WTC11 (cell line): ENCODE measurements at regions of chr3 and their contacts with region 1.

Region 1: DNA sequence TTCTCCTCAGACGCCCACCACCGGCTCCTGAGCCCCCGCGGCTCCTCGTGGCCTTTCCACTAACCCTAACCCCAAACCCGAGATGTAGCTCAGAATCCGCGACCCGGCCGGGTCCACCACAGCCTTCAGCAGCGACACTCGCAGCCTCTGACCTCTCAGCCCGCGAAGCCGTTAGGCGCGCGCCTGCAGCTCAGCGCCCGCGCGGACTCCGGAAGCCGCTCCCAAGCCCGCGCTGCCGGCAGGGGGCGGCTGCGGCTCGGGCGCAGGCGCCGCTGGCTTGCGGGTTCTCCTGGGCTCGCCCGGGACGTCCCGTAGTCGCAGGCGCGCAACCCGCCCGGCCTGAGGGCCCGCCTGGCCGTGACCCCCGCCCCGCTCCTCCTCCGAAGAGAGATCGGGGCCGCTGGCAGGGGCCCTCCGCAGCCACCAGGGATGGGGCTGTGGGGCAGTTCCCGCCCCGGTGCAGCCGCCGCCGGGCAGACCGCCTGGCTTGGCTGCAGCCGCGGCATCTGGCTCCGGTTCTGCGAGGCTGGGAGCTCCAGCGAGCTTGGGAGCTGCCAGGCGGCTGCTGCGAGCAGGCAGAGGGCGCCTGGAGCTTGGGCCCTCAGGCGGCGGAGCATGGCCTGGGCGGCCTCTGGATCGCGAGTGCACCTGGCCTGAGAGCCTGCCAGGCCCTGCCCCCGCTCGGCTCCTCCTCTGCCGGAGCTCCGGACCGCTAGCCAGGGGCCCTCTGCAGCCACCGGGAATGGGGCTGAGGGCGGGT is 120.7 kb downstream of the LMLN start:
- DNase-seq: peak; percentile 81
- ATAC-seq: peak; percentile 83
- H3K4me3 Mint-ChIP-seq: peak overlapping the region; percentile 72
- H3K27ac Mint-ChIP-seq: no peak overlapping the region
- H3K4me1 Mint-ChIP-seq: peaks cover 8% of the 10 kb centered on the region; the same call in 1 of the 2 replicates
- H3K27me3 Mint-ChIP-seq: peaks cover 85% of the 10 kb centered on the region
- CTCF ChIP-seq: peak; percentile 54; the same call in 1 of the 2 replicates

Region 2: GRCh38 chr3:197906023-197906849 is 174.5 kb before region 1 on chr3:
- CTCF ChIA-PET with region 1: interaction called, 13 read pairs
- POLR2A ChIA-PET with region 1: no interaction called
- DNase-seq: peak; percentile 89
- ATAC-seq: peak; percentile 99
- H3K4me3 Mint-ChIP-seq: peak overlapping the region; percentile 31; the same call in 1 of the 2 replicates
- H3K27ac Mint-ChIP-seq: no peak overlapping the region
- H3K4me1 Mint-ChIP-seq: peaks cover 8% of the 10 kb centered on the region
- H3K27me3 Mint-ChIP-seq: no peaks in the 10 kb centered on the region
- CTCF ChIP-seq: peak; percentile 85

Region 3: DNA sequence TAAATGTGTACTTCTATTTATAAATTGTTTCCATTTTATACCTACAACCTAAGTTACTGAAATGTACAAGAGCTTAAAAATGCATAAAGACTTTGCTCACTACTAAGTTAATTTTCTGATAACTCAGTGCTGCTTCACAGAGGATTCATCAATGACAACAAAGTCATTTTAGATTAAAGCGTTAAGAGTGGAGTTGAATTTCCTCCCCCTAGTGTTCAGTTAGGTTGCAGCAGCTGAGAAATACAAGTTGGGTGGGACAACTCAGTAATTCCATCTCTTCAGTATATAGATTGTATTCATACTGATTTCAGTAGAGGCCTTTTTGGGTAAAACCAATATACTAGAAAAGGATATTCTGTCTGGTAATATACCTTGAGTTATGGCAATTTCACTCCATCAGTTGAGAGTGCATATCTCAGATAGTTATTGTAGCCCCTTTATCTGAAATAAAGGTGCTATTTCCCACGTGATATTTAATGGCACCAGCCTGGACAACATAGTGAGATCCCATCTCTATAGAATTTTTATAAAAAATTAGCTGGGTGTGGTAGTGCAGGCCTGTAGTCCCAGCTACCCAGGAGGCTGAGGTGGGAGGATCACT is 137.6 kb before region 1 on chr3:
- CTCF ChIA-PET with region 1: no interaction called
- POLR2A ChIA-PET with region 1: no interaction called
- DNase-seq: no peak
- ATAC-seq: peak; percentile 66
- H3K4me3 Mint-ChIP-seq: no peak overlapping the region
- H3K27ac Mint-ChIP-seq: no peak overlapping the region
- H3K4me1 Mint-ChIP-seq: no peaks in the 10 kb centered on the region
- H3K27me3 Mint-ChIP-seq: no peaks in the 10 kb centered on the region
- CTCF ChIP-seq: peak; percentile 31

Region 4: GRCh38 chr3:198112031-198112430 is 31.3 kb after region 1 on chr3:
- CTCF ChIA-PET with region 1: interaction called, 12 read pairs
- POLR2A ChIA-PET with region 1: no interaction called
- DNase-seq: no peak
- ATAC-seq: no peak
- H3K4me3 Mint-ChIP-seq: no peak overlapping the region
- H3K27ac Mint-ChIP-seq: no peak overlapping the region
- H3K4me1 Mint-ChIP-seq: peaks cover 17% of the 10 kb centered on the region
- H3K27me3 Mint-ChIP-seq: peaks cover 71% of the 10 kb centered on the region
- CTCF ChIP-seq: no peak